ENCODE measurements at regions of chr4 and their contacts with region 1.

Region 1: DNA sequence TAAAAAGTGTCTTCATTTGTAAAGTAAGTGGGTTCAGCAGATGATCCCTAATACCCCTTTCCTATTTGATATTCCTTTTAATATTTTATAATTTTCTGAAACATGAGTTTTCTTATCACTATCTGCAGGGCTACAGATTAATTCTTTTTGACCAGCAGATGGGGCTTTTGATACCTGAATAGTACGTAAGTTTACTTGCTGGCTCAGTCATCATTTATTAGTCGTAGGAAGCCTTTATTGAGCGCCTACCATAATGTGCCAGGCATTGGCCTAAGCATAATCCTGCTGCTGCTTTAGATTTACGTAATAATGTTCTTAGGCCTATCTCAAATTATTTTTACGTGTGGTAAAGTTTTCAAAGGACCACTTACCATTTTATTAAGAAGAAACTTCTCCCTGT is 33.1 kb downstream of the OSTC start:
- DNase-seq: no peak
- H3K4me3 Mint-ChIP-seq: no peak overlapping the region
- H3K27ac Mint-ChIP-seq: no peak overlapping the region
- H3K4me1 Mint-ChIP-seq: no peaks in the 10 kb centered on the region
- H3K27me3 Mint-ChIP-seq: no peaks in the 10 kb centered on the region
- CTCF ChIP-seq: no peak

Region 2: GRCh38 chr4:108783665-108784463 is 100.4 kb after region 1 on chr4:
- CTCF ChIA-PET with region 1: no interaction called
- intact Hi-C with region 1: loop called (anchors 2 kb)
- DNase-seq: peak; percentile 0
- H3K4me3 Mint-ChIP-seq: no peak overlapping the region
- H3K27ac Mint-ChIP-seq: no peak overlapping the region
- H3K4me1 Mint-ChIP-seq: no peaks in the 10 kb centered on the region
- H3K27me3 Mint-ChIP-seq: no peaks in the 10 kb centered on the region
- CTCF ChIP-seq: no peak

Region 3: DNA sequence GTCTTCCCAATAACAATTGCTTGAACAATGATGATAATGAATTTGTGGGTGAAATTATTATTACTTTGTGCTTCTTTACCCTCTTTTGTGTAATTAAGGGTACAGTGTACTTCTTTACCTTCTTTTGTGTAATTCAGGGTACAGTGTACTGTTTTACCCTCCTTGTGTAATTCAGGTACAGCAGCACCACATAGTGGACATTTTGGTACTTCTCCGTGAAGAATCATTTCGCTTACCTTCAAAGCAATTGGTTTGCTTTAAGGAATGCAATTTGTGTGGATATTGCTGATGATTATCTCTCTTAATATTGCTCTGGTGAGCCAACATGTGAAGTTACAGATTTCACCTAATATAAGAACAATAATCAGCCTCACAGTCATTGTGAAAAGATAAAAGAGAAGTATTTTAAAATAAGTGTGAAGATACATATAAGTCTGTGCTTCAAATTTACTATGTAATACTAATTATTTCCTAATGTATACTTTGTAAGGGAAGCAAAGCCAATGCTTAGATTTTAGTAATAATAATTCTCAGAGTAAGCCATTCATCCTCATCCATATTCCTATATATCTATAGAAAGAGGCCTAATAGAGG is 723.0 kb after region 1 on chr4:
- CTCF ChIA-PET with region 1: no interaction called
- intact Hi-C with region 1: loop called (anchors 1 kb)
- DNase-seq: peak; percentile 32
- H3K4me3 Mint-ChIP-seq: no peak overlapping the region
- H3K27ac Mint-ChIP-seq: no peak overlapping the region
- H3K4me1 Mint-ChIP-seq: peaks cover 8% of the 10 kb centered on the region
- H3K27me3 Mint-ChIP-seq: no peaks in the 10 kb centered on the region
- CTCF ChIP-seq: peak; percentile 31